ENCODE measurements at regions of chr13 and their contacts with region 1.

Region 1: DNA sequence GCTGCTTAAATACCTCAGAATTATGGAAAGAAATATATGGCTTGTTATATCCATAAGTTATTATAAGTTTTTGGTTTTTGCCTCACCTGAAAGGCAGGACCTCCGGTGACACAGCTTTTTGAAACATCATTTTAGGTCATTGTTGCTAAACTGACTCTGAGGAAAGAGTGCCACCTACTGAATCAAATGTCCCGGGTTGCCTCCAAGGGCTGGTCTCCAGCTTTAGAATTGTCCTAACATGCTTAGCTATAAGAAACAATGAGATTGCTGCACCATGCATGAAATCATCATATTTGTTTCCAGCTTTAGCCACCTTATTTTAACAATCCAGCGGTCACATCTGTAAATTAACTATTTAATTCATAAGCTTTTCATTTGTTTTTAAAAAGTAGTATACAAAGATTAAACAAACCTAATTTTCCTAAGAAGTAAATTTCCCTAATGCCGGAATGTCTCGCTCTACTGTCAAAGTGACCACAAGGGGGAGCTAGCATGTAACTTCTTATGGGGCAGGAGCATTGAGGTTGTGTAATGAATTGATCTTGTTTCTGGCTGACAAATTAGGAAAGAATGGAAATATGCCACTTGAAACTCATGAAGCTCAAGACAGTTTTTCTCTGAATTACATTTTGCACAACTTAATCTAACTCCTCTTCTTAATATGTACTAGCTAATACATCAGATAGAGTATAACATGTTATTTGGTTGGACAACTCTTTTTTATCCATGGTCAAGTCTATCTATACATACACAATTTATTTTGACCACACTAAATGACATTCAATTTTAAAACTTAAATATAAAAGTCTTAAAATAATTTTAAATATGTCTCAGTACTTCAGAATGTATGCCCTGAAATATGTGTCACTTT is 6.7 kb upstream of the PCDH17 start:
- DNase-seq: no peak
- H3K4me3 ChIP-seq: peak overlapping the region in 1 of 4 experiments; percentile 29; a peak in 2 of 8 replicates
- H3K27ac ChIP-seq: no peak overlapping the region
- H3K4me1 ChIP-seq: peaks cover 0 to 3% (median 0%) of the 10 kb centered on the region in 4 experiments; a peak in 2 of 7 replicates
- H3K27me3 ChIP-seq: peaks cover 10 to 19% (median 13%) of the 10 kb centered on the region in 4 experiments
- CTCF ChIP-seq: peak in 2 of 3 experiments; percentile 55 to 70; a peak in 3 of 4 replicates
- EP300 ChIP-seq: no peak
- POLR2A ChIP-seq: no peak
- RAD21 ChIP-seq: peak; percentile 72 to 81

Region 2: DNA sequence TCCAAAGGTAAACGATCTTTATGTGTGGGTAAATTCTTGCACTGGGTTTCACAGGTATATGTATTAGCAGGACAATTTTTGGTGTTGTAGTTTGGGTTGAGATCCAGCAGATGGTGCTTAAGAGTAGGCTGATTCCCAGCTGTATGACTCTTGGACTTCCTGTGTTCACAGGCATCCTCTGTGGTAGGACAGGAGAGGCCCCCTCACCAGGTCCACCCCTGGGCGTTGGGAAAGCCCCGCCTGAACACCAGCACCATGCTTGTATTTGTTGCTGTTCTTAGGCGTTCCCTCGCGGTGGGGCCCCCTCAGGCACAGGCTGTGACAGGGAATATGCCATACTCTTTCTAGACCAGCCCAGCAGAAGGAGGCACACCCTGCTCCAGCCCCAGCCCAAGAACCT is 42.8 kb before region 1 on chr13:
- CTCF ChIA-PET with region 1: interaction called, 89 read pairs
- POLR2A ChIA-PET with region 1: no interaction called
- DNase-seq: peak; percentile 21 to 51
- H3K4me3 ChIP-seq: no peak overlapping the region
- H3K27ac ChIP-seq: no peak overlapping the region
- H3K4me1 ChIP-seq: peaks cover 0 to 3% (median 0%) of the 10 kb centered on the region in 4 experiments; a peak in 1 of 7 replicates
- H3K27me3 ChIP-seq: no peaks in the 10 kb centered on the region
- CTCF ChIP-seq: peak in 2 of 3 experiments; percentile 50 to 61; a peak in 3 of 4 replicates
- EP300 ChIP-seq: no peak
- POLR2A ChIP-seq: no peak
- RAD21 ChIP-seq: peak; percentile 49 to 65

Region 3: GRCh38 chr13:57595775-57596174 is 29.0 kb before region 1 on chr13:
- CTCF ChIA-PET with region 1: interaction called, 14 read pairs
- POLR2A ChIA-PET with region 1: no interaction called
- DNase-seq: no peak
- H3K4me3 ChIP-seq: no peak overlapping the region
- H3K27ac ChIP-seq: no peak overlapping the region
- H3K4me1 ChIP-seq: no peaks in the 10 kb centered on the region
- H3K27me3 ChIP-seq: no peaks in the 10 kb centered on the region
- CTCF ChIP-seq: no peak
- EP300 ChIP-seq: no peak
- POLR2A ChIP-seq: no peak
- RAD21 ChIP-seq: no peak

Region 4: DNA sequence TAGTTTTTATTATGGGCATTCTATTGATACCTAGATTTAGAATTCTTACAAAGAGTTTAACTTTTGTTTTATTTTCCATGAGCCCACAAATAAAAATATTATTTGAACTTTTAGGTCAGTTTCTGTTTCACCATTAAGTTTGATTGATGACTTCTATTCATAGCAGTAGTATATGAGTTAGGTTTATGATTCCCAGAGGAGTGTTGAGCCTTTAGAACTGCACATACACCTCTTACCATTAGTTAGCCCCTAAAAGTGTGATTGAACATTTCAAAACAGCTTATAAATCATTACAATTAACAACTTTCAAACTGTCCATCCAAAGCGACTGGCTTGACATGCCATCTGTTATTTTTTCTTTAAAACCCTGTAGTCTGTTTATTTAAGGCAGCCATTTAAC is 12.2 kb before region 1 on chr13:
- CTCF ChIA-PET with region 1: interaction called, 11 read pairs
- POLR2A ChIA-PET with region 1: no interaction called
- DNase-seq: no peak
- H3K4me3 ChIP-seq: no peak overlapping the region
- H3K27ac ChIP-seq: no peak overlapping the region
- H3K4me1 ChIP-seq: no peaks in the 10 kb centered on the region; a peak in 1 of 7 replicates
- H3K27me3 ChIP-seq: no peaks in the 10 kb centered on the region
- CTCF ChIP-seq: no peak
- EP300 ChIP-seq: no peak
- POLR2A ChIP-seq: no peak
- RAD21 ChIP-seq: no peak

Region 5: GRCh38 chr13:57716295-57716694 is 91.5 kb after region 1 on chr13:
- CTCF ChIA-PET with region 1: interaction called, 107 read pairs
- POLR2A ChIA-PET with region 1: no interaction called
- DNase-seq: no peak
- H3K4me3 ChIP-seq: no peak overlapping the region
- H3K27ac ChIP-seq: no peak overlapping the region
- H3K4me1 ChIP-seq: no peaks in the 10 kb centered on the region; a peak in 1 of 7 replicates
- H3K27me3 ChIP-seq: no peaks in the 10 kb centered on the region
- CTCF ChIP-seq: peak in 2 of 3 experiments; percentile 67 to 71; a peak in 3 of 4 replicates
- EP300 ChIP-seq: no peak
- POLR2A ChIP-seq: no peak
- RAD21 ChIP-seq: peak; percentile 85 to 88

Region 6: GRCh38 chr13:57726981-57727380 is 102.2 kb after region 1 on chr13:
- CTCF ChIA-PET with region 1: interaction called, 12 read pairs
- POLR2A ChIA-PET with region 1: interaction called, 3 read pairs
- DNase-seq: no peak
- H3K4me3 ChIP-seq: no peak overlapping the region
- H3K27ac ChIP-seq: no peak overlapping the region
- H3K4me1 ChIP-seq: peaks cover 0 to 7% (median 2%) of the 10 kb centered on the region in 4 experiments; a peak in 4 of 7 replicates
- H3K27me3 ChIP-seq: no peaks in the 10 kb centered on the region
- CTCF ChIP-seq: no peak
- EP300 ChIP-seq: no peak
- POLR2A ChIP-seq: no peak
- RAD21 ChIP-seq: no peak

Region 7: GRCh38 chr13:57935965-57936364 is 311.2 kb after region 1 on chr13:
- CTCF ChIA-PET with region 1: no interaction called
- POLR2A ChIA-PET with region 1: no interaction called
- DNase-seq: no peak
- H3K4me3 ChIP-seq: no peak overlapping the region
- H3K27ac ChIP-seq: no peak overlapping the region
- H3K4me1 ChIP-seq: no peaks in the 10 kb centered on the region
- H3K27me3 ChIP-seq: no peaks in the 10 kb centered on the region
- CTCF ChIP-seq: no peak
- EP300 ChIP-seq: no peak
- POLR2A ChIP-seq: no peak
- RAD21 ChIP-seq: no peak

Region 8: DNA sequence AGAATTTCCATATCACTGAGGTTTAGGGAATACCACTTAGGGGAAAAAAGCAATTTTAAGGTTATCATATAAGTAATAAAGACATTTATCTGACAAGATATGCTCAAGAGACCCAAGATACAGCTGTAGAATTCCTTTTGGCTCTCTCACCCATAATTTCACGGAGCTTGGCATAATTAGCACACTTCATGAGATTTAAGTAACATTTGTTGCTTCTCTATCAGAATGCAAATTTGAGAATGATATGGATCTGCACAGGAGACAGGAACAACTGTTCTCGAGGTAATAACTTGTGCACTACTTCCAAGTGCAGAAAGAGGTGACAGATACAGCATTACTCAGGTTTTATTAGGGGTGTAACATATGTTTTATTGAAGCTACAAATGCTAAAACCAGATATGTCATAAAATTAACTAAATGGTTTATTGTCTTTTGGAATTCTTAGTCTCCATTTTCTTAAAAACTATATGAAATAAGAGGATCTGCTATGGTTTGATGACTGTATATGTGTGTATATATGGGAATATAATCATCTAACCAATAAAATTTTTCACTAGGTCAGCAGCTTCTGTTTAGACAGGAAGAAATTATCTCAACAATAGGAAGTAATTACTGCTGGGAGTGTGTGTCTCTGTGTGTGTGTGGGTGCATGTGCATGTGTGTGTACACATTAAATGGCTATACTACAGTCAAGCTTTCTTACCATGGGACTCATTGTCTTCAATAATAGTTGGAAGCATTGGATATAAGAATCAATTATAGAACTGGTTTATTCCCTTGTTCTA is 408.1 kb after region 1 on chr13:
- CTCF ChIA-PET with region 1: no interaction called
- POLR2A ChIA-PET with region 1: no interaction called
- DNase-seq: no peak
- H3K4me3 ChIP-seq: no peak overlapping the region
- H3K27ac ChIP-seq: no peak overlapping the region
- H3K4me1 ChIP-seq: no peaks in the 10 kb centered on the region
- H3K27me3 ChIP-seq: no peaks in the 10 kb centered on the region
- CTCF ChIP-seq: no peak
- EP300 ChIP-seq: no peak
- POLR2A ChIP-seq: no peak
- RAD21 ChIP-seq: no peak